CD4-positive, alpha-beta T cell (primary cell): ENCODE measurements at regions of chr14 and their contacts with region 1.

Region 1: GRCh38 chr14:21734457-21735074 is 60.9 kb upstream of the OR4E1 start:
- DNase-seq: peak in 8 of 14 experiments; percentile 19 to 84 (median 46)
- ATAC-seq: peak; percentile 62
- H3K4me3 ChIP-seq: no peak overlapping the region
- H3K4me3 Mint-ChIP-seq: no peak overlapping the region
- H3K27ac ChIP-seq: no peak overlapping the region
- H3K27ac Mint-ChIP-seq: peak overlapping the region; percentile 9
- H3K4me1 ChIP-seq: no peaks in the 10 kb centered on the region
- H3K4me1 Mint-ChIP-seq: peaks cover 12% of the 10 kb centered on the region
- H3K27me3 ChIP-seq: peaks cover 0 to 9% of the 10 kb centered on the region in 2 experiments
- H3K27me3 Mint-ChIP-seq: peaks cover 52% of the 10 kb centered on the region
- CTCF ChIP-seq: peak; percentile 77

Region 2: DNA sequence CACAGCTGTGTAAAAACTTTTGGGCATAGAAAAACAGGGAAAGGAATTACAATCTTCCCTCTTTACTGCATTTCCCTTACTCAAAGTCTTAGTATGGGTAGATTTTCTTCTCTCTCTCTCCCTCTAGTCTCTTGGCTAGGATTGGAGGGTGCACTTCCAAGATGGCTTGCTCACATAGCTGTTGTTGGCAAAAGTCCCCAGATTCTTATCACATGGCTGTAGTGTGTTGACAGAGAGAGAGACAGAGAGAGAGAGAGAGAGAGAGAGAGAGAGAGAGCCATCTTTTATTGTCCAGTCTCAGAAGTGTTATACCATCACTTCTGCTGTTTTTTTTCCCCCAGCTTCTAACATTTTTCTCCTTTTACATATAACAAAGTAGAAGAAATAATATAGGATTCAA is 87.2 kb before region 1 on chr14:
- CTCF ChIA-PET with region 1: no interaction called
- POLR2A ChIA-PET with region 1: no interaction called
- intact Hi-C with region 1: no loop called
- DNase-seq: no peak
- ATAC-seq: no peak
- H3K4me3 ChIP-seq: no peak overlapping the region
- H3K4me3 Mint-ChIP-seq: no peak overlapping the region
- H3K27ac ChIP-seq: no peak overlapping the region
- H3K27ac Mint-ChIP-seq: no peak overlapping the region
- H3K4me1 ChIP-seq: no peaks in the 10 kb centered on the region
- H3K4me1 Mint-ChIP-seq: no peaks in the 10 kb centered on the region
- H3K27me3 ChIP-seq: peaks cover 0 to 5% of the 10 kb centered on the region in 2 experiments
- H3K27me3 Mint-ChIP-seq: peaks cover 27% of the 10 kb centered on the region
- CTCF ChIP-seq: no peak

Region 3: DNA sequence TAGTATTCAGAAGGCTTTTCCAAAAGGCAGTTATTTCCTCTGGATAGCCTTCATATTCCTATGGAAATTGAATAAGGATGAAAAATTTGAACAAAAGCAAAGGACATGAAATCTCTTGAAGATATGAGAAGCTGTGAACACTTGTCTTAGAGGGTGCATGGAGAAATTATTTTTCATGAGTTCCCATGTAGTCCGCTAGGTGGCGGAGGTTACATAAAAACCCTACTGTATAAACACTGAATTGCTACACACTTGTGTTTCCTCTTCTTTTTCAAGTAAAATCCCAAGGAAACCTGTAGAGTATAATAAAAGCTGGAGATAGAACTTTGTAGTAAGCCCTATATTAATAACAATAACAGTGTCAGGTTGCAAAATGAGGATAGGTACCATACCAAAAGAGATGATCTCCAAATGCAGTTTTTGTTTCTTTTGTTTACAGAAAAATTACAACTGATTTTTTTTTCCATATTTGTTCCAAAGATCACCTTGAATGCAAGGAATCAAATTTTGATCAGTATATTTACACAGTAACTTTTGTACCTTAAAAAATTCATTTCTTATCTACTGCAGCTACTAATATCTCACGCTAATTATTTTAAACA is 23.1 kb before region 1 on chr14:
- CTCF ChIA-PET with region 1: interaction called, 6 read pairs
- POLR2A ChIA-PET with region 1: no interaction called
- intact Hi-C with region 1: loop called in 1 of 2 experiments (anchors 1 kb)
- DNase-seq: peak in 6 of 14 experiments; percentile 8 to 70 (median 48)
- ATAC-seq: peak; percentile 60
- H3K4me3 ChIP-seq: no peak overlapping the region
- H3K4me3 Mint-ChIP-seq: peak overlapping the region; percentile 81
- H3K27ac ChIP-seq: no peak overlapping the region
- H3K27ac Mint-ChIP-seq: peak overlapping the region; percentile 77
- H3K4me1 ChIP-seq: peaks cover 5% of the 10 kb centered on the region
- H3K4me1 Mint-ChIP-seq: peaks cover 14% of the 10 kb centered on the region
- H3K27me3 ChIP-seq: peaks cover 0 to 3% of the 10 kb centered on the region in 2 experiments
- H3K27me3 Mint-ChIP-seq: peaks cover 37% of the 10 kb centered on the region
- CTCF ChIP-seq: peak; percentile 90

Region 4: DNA sequence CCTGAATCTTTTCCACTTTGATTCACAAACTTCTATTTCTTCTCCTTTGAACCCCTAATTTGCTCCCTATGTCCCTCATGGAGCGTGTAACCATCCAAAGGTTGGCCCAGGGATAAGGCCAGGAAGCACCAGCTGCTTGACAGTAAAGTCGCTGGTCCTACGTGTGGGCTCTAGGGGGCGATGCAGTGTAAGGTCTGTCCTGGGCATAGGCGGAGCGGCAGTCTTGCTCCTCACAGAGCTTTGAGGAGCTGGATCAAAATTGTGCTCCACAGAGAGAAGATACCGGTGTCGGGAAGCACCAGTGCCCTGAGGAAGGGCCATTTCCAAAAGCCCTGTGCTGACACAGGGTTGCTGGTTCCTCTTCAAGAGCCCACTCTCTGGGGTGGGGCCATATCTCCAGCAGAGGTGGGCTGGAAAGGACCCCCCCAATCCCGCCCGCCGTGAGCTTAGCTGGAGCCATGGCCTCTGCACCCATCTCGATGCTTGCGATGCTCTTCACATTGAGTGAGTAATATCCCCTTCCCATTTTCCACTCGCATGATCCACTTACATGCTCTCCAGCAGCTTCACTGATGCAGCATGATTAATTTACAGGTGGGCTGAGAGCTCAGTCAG is 11.0 kb before region 1 on chr14:
- CTCF ChIA-PET with region 1: interaction called, 10 read pairs
- POLR2A ChIA-PET with region 1: interaction called, 7 read pairs
- intact Hi-C with region 1: no loop called
- DNase-seq: peak in 11 of 14 experiments; percentile 18 to 72 (median 32)
- ATAC-seq: peak; percentile 82
- H3K4me3 ChIP-seq: peak overlapping the region; percentile 44
- H3K4me3 Mint-ChIP-seq: peak overlapping the region; percentile 85
- H3K27ac ChIP-seq: no peak overlapping the region
- H3K27ac Mint-ChIP-seq: peak overlapping the region; percentile 75
- H3K4me1 ChIP-seq: no peaks in the 10 kb centered on the region
- H3K4me1 Mint-ChIP-seq: no peaks in the 10 kb centered on the region
- H3K27me3 ChIP-seq: peaks cover 0 to 5% of the 10 kb centered on the region in 2 experiments
- H3K27me3 Mint-ChIP-seq: peaks cover 51% of the 10 kb centered on the region
- CTCF ChIP-seq: peak; percentile 32

Region 5: DNA sequence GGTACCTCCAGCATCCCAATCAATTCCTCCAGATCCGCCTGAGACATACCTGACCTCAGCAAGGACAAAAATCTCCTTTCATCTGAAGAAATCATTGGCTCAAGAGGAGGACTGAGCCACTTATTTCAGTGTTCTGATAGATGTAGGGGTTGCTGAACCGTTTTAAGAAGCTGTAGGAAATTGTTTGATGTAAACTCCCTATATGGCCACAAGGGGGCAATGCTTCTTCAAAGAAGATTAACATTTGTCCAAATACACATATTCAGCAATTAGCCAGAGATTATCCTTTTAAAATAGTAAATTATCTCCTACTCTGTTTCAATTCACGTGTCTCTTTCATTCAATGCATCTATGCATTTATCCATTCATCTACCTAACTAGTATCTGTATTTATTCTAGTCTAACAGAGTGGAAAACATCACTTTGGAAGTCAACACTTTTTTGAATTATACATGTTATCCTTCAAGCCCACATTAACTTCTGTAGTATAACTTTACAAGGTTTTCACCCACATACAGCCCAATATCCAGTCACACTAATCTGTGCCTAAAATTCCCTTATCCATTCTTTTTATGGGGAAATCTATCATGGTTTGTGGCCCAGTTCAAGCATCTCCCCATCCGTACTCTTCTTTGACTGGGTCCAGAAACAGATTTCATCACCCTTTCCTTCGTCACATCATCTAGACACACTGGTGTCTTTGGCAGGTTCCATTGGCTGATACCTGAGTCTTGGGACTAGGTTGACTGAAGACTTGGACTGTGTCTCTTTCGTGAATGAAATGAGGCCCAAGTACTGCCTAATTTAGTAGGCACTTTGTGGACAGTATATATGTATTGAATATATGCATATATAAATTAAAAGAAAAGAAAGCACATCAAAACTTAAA is 350.1 kb after region 1 on chr14:
- CTCF ChIA-PET with region 1: no interaction called
- POLR2A ChIA-PET with region 1: no interaction called
- intact Hi-C with region 1: no loop called
- DNase-seq: peak in 5 of 14 experiments; percentile 5 to 73 (median 60)
- ATAC-seq: peak; percentile 51
- H3K4me3 ChIP-seq: no peak overlapping the region
- H3K4me3 Mint-ChIP-seq: peak overlapping the region; percentile 23
- H3K27ac ChIP-seq: no peak overlapping the region
- H3K27ac Mint-ChIP-seq: peak overlapping the region; percentile 35
- H3K4me1 ChIP-seq: peaks cover 2% of the 10 kb centered on the region
- H3K4me1 Mint-ChIP-seq: peaks cover 31% of the 10 kb centered on the region
- H3K27me3 ChIP-seq: no peaks in the 10 kb centered on the region
- H3K27me3 Mint-ChIP-seq: no peaks in the 10 kb centered on the region
- CTCF ChIP-seq: peak; percentile 55